ENCODE measurements at regions of chr9 and their contacts with region 1.

Region 1: DNA sequence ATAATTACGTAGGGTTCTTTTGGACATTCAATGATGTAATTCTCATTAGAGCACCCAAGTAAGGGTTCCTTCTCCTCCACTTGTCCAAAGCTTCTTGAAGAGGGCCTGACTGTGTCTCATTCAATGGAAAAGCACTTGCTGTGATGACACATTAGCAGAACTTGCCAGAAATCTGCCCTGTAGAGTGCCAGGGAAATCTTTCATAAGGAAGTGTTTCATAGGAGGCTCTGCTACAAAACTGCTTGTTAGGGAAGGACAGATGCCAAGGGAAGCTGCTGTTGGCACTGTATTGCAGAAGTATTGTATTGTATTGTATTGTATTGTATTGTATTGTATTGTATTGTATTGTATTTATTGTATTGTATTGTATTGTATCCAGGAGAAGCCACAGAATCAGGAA is 45.5 kb upstream of the MPDZ start:
- DNase-seq: no peak
- H3K4me3 ChIP-seq: no peak overlapping the region
- H3K27ac ChIP-seq: peak overlapping the region in 1 of 4 donors; percentile 36
- H3K4me1 ChIP-seq: peaks cover 0 to 21% (median 10%) of the 10 kb centered on the region in 4 donors
- H3K27me3 ChIP-seq: no peaks in the 10 kb centered on the region
- CTCF ChIP-seq: no peak
- EP300 ChIP-seq: no peak
- POLR2A ChIP-seq: no peak

Region 2: GRCh38 chr9:13279284-13280141 is 45.5 kb before region 1 on chr9 and contains the start of gene MPDZ:
- intact Hi-C with region 1: loop called (anchors 5 kb)
- DNase-seq: peak; percentile 85
- H3K4me3 ChIP-seq: peak within 1 kb of the TSS; percentile 61 to 75 (median 70)
- H3K27ac ChIP-seq: peak within 1 kb of the TSS; percentile 90 to 97 (median 95)
- H3K4me1 ChIP-seq: peaks cover 0 to 74% (median 58%) of the 10 kb centered on the region in 4 donors
- H3K27me3 ChIP-seq: no peaks in the 10 kb centered on the region
- CTCF ChIP-seq: no peak
- EP300 ChIP-seq: no peak
- POLR2A ChIP-seq: no peak
- total RNA-seq, gene MPDZ: 62.8 to 72.2 (median 65.9) TPM

Region 3: GRCh38 chr9:13364271-13365000 is 39.4 kb after region 1 on chr9:
- intact Hi-C with region 1: no loop called
- DNase-seq: no peak
- H3K4me3 ChIP-seq: no peak overlapping the region
- H3K27ac ChIP-seq: no peak overlapping the region
- H3K4me1 ChIP-seq: peaks cover 0 to 27% (median 9%) of the 10 kb centered on the region in 4 donors
- H3K27me3 ChIP-seq: no peaks in the 10 kb centered on the region
- CTCF ChIP-seq: no peak
- EP300 ChIP-seq: no peak
- POLR2A ChIP-seq: no peak